Natural killer cell (primary cell): ENCODE measurements at regions of chr4 and their contacts with region 1.

Region 1: GRCh38 chr4:2262143-2262943 is 434 bp upstream of the MXD4 start:
- DNase-seq: peak; percentile 98
- ATAC-seq: peak; percentile 86 to 95 (median 86)
- H3K4me3 ChIP-seq: peak overlapping the region; percentile 82
- H3K4me3 Mint-ChIP-seq: peak overlapping the region; percentile 89
- H3K27ac ChIP-seq: peak overlapping the region; percentile 99
- H3K27ac Mint-ChIP-seq: peak overlapping the region; percentile 73 to 89
- H3K4me1 ChIP-seq: peaks cover 39% of the 10 kb centered on the region
- H3K4me1 Mint-ChIP-seq: peaks cover 0 to 5% of the 10 kb centered on the region in 2 donors
- H3K27me3 ChIP-seq: no peaks in the 10 kb centered on the region
- H3K27me3 Mint-ChIP-seq: no peaks in the 10 kb centered on the region
- CTCF ChIP-seq: no peak

Region 2: DNA sequence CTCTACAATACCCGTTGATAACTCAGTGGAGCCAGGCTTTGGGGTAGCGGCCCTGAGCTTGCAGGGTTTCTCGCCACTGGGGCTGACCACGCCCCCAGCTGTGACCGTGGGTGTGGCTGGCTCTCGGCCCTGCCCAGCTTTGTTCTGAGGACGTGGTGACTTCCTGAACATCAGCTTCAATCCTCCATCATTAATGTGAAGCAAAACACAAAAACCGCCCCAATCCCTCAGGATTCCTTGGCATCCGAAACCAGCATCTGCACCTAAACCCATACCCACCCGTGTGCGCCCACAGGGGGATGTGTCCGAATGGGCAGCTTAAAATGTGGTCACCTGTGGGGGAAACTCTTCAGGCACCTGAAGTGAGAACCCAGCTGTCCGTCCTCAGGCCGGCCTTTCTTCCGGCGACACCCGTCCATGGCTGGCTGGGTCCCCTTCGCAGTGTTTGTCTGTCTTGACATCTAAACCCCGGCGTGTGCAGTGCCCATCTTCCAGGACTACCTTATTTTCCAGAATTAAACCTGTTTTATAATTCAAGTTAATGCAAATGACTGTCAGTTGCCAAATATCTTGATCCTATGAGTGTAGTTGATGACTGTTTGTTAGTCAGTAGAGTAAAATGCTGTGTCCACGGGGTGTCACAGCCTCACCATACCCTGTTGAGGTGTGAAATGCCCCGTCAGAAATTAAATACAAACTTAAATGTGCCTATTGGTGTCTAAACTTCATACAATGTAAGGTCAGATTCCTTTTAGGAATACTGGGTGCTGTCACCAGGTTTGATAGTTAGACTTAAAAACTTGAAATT is 280.9 kb before region 1 on chr4:
- intact Hi-C with region 1: no loop called
- DNase-seq: no peak
- ATAC-seq: no peak
- H3K4me3 ChIP-seq: no peak overlapping the region
- H3K4me3 Mint-ChIP-seq: no peak overlapping the region
- H3K27ac ChIP-seq: no peak overlapping the region
- H3K27ac Mint-ChIP-seq: peak overlapping the region in 1 of 2 donors; percentile 33
- H3K4me1 ChIP-seq: no peaks in the 10 kb centered on the region
- H3K4me1 Mint-ChIP-seq: peaks cover 5 to 9% of the 10 kb centered on the region in 2 donors
- H3K27me3 ChIP-seq: no peaks in the 10 kb centered on the region
- H3K27me3 Mint-ChIP-seq: no peaks in the 10 kb centered on the region
- CTCF ChIP-seq: no peak

Region 3: GRCh38 chr4:2281575-2282343 is 19.4 kb after region 1 on chr4:
- intact Hi-C with region 1: loop called (anchors 1 kb)
- DNase-seq: peak; percentile 79 to 97
- ATAC-seq: peak; percentile 85 to 94 (median 87)
- H3K4me3 ChIP-seq: no peak overlapping the region
- H3K4me3 Mint-ChIP-seq: peak overlapping the region; percentile 76
- H3K27ac ChIP-seq: peak overlapping the region; percentile 89
- H3K27ac Mint-ChIP-seq: peak overlapping the region; percentile 95 to 97
- H3K4me1 ChIP-seq: peaks cover 33% of the 10 kb centered on the region
- H3K4me1 Mint-ChIP-seq: peaks cover 27 to 46% of the 10 kb centered on the region in 2 donors
- H3K27me3 ChIP-seq: no peaks in the 10 kb centered on the region
- H3K27me3 Mint-ChIP-seq: no peaks in the 10 kb centered on the region
- CTCF ChIP-seq: peak; percentile 27

Region 4: DNA sequence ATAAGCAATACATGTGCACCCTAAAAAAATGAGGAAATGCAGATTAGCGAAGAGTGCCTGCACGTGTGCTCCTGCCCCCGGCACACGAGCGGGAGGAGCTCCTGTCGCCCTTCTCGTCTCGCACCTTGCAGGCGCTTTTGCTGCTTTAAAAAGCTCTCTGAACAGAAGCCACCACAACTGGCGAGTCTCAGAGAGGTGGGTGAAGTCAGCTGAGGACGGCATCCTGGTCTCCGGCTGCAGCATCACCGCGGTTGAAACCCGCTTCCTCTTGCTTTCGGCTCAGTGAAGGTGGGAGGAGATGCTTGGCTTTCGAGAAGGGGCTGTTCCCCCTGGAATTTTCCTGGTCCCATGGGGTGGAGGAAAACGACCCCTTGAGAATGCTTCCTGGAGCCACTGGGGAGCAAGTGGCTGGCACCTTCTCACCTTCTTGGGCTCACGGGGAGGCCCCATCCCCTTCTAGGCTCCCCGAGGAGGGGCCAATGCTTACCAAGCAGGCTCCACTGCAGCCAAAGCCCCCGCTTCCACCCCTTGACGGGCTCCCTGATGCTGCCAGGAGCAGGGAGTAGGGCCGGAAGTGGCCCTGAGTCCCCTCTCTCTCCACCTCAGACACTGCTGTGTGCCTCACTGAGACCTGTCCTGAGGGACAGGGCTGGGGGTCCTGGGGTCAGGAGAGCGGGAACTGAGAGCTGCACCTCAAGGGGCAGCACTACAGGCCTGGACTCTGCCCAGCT is 28.8 kb after region 1 on chr4:
- intact Hi-C with region 1: loop called (anchors 1 kb)
- DNase-seq: peak; percentile 78 to 95
- ATAC-seq: peak; percentile 88 to 92 (median 92)
- H3K4me3 ChIP-seq: no peak overlapping the region
- H3K4me3 Mint-ChIP-seq: peak overlapping the region; percentile 87
- H3K27ac ChIP-seq: peak overlapping the region; percentile 72
- H3K27ac Mint-ChIP-seq: peak overlapping the region; percentile 95
- H3K4me1 ChIP-seq: peaks cover 39% of the 10 kb centered on the region
- H3K4me1 Mint-ChIP-seq: peaks cover 11 to 24% of the 10 kb centered on the region in 2 donors
- H3K27me3 ChIP-seq: no peaks in the 10 kb centered on the region
- H3K27me3 Mint-ChIP-seq: no peaks in the 10 kb centered on the region
- CTCF ChIP-seq: no peak